ENCODE measurements at regions of chr11 and their contacts with region 1.

Region 1: GRCh38 chr11:83724008-83724461 is 437.9 kb upstream of the CCDC90B start:
- DNase-seq: peak; percentile 18
- H3K4me3 ChIP-seq: no peak overlapping the region; a peak in 2 of 4 replicates
- H3K27ac ChIP-seq: no peak overlapping the region; a peak in 1 of 4 replicates
- H3K4me1 ChIP-seq: peaks cover 13 to 30% of the 10 kb centered on the region in 2 experiments; a peak in 3 of 4 replicates
- H3K27me3 ChIP-seq: no peaks in the 10 kb centered on the region
- CTCF ChIP-seq: peak; percentile 67
- EP300 ChIP-seq: no peak
- RAD21 ChIP-seq: peak; percentile 70

Region 2: GRCh38 chr11:83292709-83293456 is 431.2 kb before region 1 on chr11:
- CTCF ChIA-PET with region 1: interaction called, 30 read pairs
- POLR2A ChIA-PET with region 1: no interaction called
- DNase-seq: peak; percentile 40
- H3K4me3 ChIP-seq: peak overlapping the region in 1 of 2 experiments; percentile 40; a peak in 1 of 4 replicates
- H3K27ac ChIP-seq: no peak overlapping the region
- H3K4me1 ChIP-seq: no peaks in the 10 kb centered on the region
- H3K27me3 ChIP-seq: no peaks in the 10 kb centered on the region
- CTCF ChIP-seq: peak; percentile 78
- EP300 ChIP-seq: no peak
- RAD21 ChIP-seq: peak; percentile 73

Region 3: DNA sequence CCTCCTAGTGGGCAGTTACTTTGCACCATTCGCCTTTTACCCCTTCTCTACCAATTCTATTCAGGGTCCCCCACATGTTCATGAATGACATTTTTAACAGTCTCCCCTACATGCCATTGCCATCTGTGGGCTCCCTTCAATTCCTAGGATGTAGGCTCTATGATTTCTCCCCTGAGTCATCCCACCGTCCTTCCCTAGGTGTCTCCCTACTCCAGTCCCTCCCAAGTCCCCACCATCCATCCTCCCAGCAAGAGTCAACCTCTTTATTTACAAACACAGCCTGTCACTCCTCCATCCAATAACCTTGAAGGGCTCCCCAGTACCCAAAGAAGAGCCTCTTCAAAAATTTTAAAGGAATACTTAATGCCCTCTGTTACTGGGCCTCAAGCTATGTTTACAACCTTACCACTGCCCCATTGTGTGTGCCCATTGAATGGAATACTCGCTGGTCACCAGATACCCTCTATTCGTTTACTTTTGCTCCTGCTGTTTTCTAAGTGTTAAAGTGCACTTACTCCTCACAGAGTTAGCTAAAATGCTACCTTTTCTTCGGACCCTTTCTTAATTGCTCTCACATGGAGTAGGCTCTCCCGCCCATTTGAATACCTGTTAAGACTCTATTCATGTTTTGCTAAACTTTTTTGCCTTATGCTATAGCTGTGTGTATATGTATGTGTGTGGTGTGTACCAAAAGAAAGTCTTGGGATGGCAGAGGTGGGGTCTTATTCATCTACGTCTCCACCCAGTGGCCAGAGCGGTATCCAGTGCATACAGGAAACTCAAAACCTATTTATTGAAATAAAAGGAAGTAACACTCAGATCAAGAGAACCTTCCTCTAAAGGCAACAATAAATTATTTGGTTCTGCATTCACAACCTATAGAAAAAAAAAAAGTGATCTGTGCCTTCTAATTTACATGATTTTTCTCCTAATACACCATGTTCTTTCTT is 202.1 kb before region 1 on chr11:
- CTCF ChIA-PET with region 1: interaction called, 10 read pairs
- POLR2A ChIA-PET with region 1: no interaction called
- DNase-seq: peak; percentile 51
- H3K4me3 ChIP-seq: no peak overlapping the region
- H3K27ac ChIP-seq: no peak overlapping the region
- H3K4me1 ChIP-seq: peaks cover 0 to 5% of the 10 kb centered on the region in 2 experiments; a peak in 1 of 4 replicates
- H3K27me3 ChIP-seq: no peaks in the 10 kb centered on the region
- CTCF ChIP-seq: peak; percentile 53
- EP300 ChIP-seq: no peak
- RAD21 ChIP-seq: peak; percentile 88